Calu3 (cell line): ENCODE measurements at regions of chr5 and their contacts with region 1.

Region 1: DNA sequence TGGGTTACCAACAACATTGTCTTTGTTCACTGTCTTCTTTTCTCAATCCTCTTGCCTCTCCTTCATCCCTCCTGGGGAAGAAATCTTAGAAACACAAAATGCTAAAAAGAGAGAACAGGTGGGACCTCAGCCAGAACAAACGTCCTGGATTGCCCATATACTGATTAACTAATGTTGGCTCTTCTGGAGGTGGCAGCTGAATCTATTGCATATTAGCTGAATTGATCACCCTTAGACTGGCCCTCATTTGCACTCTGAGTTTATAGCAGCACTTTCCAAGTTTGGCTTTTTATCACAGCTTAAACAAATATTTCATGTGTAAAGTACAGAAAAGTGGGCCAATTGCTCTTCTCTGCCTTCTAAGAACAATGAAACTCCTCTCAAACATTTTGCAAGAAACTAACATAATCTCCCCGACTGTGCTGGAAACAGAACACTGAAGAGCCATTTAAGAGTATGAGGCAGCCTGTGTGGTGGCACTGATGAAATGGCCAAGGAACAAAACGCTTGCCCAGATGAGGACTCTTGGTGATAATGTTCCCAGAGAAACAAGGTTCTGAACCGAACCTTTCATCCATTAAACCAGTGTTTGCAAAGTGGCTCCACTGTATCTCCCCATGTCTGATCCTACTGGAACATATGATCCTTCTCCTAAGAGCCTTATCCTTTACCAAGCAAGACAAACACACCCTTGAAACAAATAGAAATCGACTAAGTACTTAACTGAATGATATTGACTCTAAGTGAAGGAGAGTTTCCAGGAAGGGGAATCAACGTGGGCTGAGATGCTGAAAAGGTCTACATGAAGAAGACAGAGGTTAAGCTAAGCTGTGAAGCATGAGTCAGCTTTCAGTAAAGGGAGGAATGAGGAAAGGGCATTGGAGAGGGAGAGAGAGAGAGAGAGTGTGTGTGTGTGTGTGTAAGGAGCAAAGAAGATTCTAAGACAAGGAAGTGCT is 83.2 kb upstream of the LIFR start:
- DNase-seq: peak; percentile 17
- H3K4me3 Mint-ChIP-seq: peak overlapping the region; percentile 10
- H3K27ac Mint-ChIP-seq: peak overlapping the region; percentile 36
- H3K4me1 Mint-ChIP-seq: peaks cover 48% of the 10 kb centered on the region
- H3K27me3 Mint-ChIP-seq: no peaks in the 10 kb centered on the region
- CTCF ChIP-seq: no peak

Region 2: GRCh38 chr5:38598994-38599611 is 40.6 kb before region 1 on chr5:
- CTCF ChIA-PET with region 1: interaction called, 8 read pairs
- intact Hi-C with region 1: loop called (anchors 2 kb)
- DNase-seq: peak; percentile 41
- H3K4me3 Mint-ChIP-seq: peak overlapping the region; percentile 32
- H3K27ac Mint-ChIP-seq: peak overlapping the region; percentile 80
- H3K4me1 Mint-ChIP-seq: peaks cover 74% of the 10 kb centered on the region
- H3K27me3 Mint-ChIP-seq: no peaks in the 10 kb centered on the region
- CTCF ChIP-seq: no peak

Region 3: GRCh38 chr5:38615981-38616451 is 23.6 kb before region 1 on chr5:
- CTCF ChIA-PET with region 1: interaction called, 3 read pairs
- intact Hi-C with region 1: loop called (anchors 2 kb)
- DNase-seq: no peak
- H3K4me3 Mint-ChIP-seq: no peak overlapping the region
- H3K27ac Mint-ChIP-seq: no peak overlapping the region
- H3K4me1 Mint-ChIP-seq: peaks cover 22% of the 10 kb centered on the region
- H3K27me3 Mint-ChIP-seq: no peaks in the 10 kb centered on the region
- CTCF ChIP-seq: no peak